ENCODE measurements at regions of chr5 and their contacts with region 1.

Region 1: DNA sequence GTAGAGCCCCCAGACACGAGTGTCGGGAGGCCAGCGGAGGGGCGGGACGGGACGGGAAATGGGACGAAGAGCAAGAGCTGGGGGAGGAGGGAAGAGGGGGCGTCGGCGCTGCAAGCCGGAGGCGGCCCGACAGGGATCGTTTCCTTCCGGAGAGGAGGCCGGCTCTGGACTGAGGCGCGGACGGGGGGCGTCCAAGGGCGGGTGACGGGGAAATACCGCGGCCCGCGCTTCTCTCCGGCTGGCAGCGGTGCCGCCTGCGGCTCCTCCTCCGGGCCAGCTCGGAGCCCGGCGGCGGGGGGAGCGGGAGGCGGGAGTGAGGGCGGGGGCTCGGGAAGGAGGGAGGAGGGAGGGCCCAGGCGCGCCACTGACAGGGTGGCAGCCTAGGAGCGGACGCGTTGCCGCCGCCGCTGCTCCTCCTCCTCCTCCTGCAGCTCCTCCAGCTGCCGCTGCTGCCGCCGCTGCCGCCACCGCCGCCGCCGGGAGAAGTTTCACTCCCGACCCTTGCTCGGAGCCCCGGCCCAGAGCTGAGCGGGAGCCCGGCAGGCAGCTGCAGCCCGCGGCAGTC is at the start of gene CHSY3:
- DNase-seq: peak; percentile 93 to 96
- ATAC-seq: peak; percentile 95
- H3K4me3 ChIP-seq: peak within 1 kb of the TSS; percentile 84 to 95
- H3K27ac ChIP-seq: peak within 1 kb of the TSS; percentile 86
- H3K4me1 ChIP-seq: no peaks in the 10 kb centered on the region
- H3K27me3 ChIP-seq: no peaks in the 10 kb centered on the region
- total RNA-seq, gene CHSY3: 19.5 to 32.5 TPM

Region 2: GRCh38 chr5:130002183-130002582 is 98.0 kb after region 1 on chr5:
- intact Hi-C with region 1: loop called in 1 of 2 experiments (anchors 5 kb)
- DNase-seq: peak in 1 of 2 donors; percentile 45
- ATAC-seq: no peak
- H3K4me3 ChIP-seq: no peak overlapping the region
- H3K27ac ChIP-seq: no peak overlapping the region
- H3K4me1 ChIP-seq: no peaks in the 10 kb centered on the region
- H3K27me3 ChIP-seq: no peaks in the 10 kb centered on the region

Region 3: GRCh38 chr5:130109152-130109551 is 205.0 kb after region 1 on chr5:
- intact Hi-C with region 1: loop called in 1 of 2 experiments (anchors 10 kb)
- DNase-seq: no peak
- ATAC-seq: no peak
- H3K4me3 ChIP-seq: no peak overlapping the region
- H3K27ac ChIP-seq: no peak overlapping the region
- H3K4me1 ChIP-seq: no peaks in the 10 kb centered on the region
- H3K27me3 ChIP-seq: no peaks in the 10 kb centered on the region

Region 4: DNA sequence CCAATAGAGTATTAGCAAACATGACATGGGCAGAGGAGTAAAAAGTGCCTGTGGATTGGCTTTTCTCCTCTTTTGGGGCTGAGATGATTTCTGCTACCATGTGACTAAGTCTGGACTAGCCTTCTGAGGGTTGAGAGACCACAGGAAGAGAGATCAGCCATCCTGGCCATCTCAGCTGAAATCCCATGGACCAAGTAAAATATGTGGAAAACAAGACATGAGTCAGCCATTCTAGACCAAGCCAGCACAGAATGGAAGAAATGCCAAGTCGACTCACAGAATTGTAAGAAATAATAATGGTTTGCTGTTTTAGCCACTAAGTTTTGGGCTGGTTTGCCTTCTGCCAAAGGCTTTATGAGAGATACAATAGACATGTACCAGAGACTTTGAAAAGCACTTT is 377.9 kb after region 1 on chr5:
- intact Hi-C with region 1: loop called in 1 of 2 experiments (anchors 5 kb)
- DNase-seq: no peak
- ATAC-seq: peak; percentile 74
- H3K4me3 ChIP-seq: no peak overlapping the region
- H3K27ac ChIP-seq: peak overlapping the region in 1 of 2 donors; percentile 6
- H3K4me1 ChIP-seq: peaks cover 0 to 3% of the 10 kb centered on the region in 2 donors
- H3K27me3 ChIP-seq: no peaks in the 10 kb centered on the region

Region 5: GRCh38 chr5:130514984-130515690 is 611.0 kb after region 1 on chr5:
- intact Hi-C with region 1: no loop called
- DNase-seq: no peak
- ATAC-seq: no peak
- H3K4me3 ChIP-seq: no peak overlapping the region
- H3K27ac ChIP-seq: no peak overlapping the region
- H3K4me1 ChIP-seq: no peaks in the 10 kb centered on the region
- H3K27me3 ChIP-seq: no peaks in the 10 kb centered on the region

Region 6: GRCh38 chr5:131109540-131110255 is 1205.5 kb after region 1 on chr5:
- intact Hi-C with region 1: loop called (anchors 5 kb)
- DNase-seq: no peak
- ATAC-seq: peak; percentile 73
- H3K4me3 ChIP-seq: no peak overlapping the region
- H3K27ac ChIP-seq: no peak overlapping the region
- H3K4me1 ChIP-seq: no peaks in the 10 kb centered on the region
- H3K27me3 ChIP-seq: no peaks in the 10 kb centered on the region

Region 7: DNA sequence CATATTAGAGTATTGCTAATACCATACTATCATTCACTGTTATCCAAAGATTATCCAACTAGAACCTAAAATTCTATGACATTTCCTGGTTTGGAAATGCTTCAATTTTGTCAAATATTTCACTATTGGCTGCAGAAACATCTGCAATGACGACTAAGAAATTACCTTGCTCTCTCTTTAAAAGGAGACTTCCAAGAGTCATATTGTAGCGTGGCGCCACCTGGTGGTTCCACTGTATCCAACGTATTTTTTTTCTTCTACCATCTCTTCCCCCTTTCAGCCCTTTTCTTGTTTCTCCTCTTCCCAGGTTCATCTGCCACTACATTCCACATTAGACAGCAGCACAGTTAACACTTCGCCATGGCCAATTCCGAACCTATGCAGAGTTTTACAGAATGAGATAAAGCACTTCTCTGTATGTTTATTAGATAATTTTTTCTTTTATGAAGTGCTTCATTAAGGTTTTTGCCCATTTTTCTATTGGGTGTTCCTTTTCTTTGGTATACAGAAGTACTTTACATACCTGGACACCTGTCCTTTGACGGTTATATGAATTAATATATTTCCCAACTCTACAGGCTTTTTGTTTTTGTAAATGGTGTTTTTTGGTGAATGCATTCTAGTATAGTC is 1513.2 kb after region 1 on chr5:
- intact Hi-C with region 1: loop called in 1 of 2 experiments (anchors 10 kb)
- DNase-seq: peak; percentile 83 to 92
- ATAC-seq: peak; percentile 74
- H3K4me3 ChIP-seq: no peak overlapping the region
- H3K27ac ChIP-seq: no peak overlapping the region
- H3K4me1 ChIP-seq: no peaks in the 10 kb centered on the region
- H3K27me3 ChIP-seq: no peaks in the 10 kb centered on the region